ENCODE measurements at regions of chr16 and their contacts with region 1.

Region 1: DNA sequence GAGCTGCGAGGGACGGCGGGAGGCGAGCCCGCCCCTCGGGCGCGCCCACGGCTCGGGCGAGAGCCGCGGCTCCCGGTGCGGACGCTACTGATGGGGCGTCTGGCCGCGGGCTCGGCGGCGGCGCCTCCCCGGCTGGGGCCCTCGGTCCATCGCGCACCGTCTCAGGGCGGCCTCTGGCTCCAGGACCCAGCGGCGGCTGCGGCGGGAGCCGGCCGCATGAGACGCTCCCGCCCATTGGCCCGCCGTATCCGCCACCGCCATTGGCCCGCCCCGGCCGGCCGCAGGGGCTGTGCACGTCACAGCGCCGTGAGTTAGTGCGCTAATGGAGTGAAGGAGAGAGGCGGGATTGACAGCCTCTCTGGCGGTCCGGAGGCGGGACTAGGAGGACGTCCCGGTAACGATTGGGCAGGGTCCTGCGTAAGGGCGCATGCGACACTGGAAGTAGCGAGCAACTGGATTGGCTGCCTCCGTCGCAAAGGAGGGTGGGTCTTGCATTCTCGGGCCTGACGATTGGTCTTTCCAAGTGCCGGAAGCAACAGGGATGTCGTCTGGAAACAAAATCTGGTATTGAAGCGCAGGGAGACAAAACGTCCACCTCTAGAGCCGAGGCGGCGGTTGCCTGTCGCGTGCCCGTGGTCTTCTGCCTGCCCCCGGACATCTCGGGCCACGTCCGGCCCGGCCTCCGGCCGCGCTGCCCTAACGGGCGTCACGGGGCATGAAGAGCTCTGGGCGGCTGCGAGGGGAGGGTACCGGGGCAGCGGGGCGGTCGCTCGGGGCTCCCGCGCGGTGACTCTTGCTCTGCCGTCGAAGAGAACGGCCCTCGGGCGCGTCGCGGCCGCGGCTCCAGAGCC is at the start of gene ANKRD11:
- DNase-seq: peak; percentile 99 to 100
- ATAC-seq: peak; percentile 99
- H3K4me3 ChIP-seq: peak within 1 kb of the TSS; percentile 99
- H3K27ac ChIP-seq: peak within 1 kb of the TSS; percentile 93 to 100
- H3K4me1 ChIP-seq: peaks cover 0 to 7% of the 10 kb centered on the region in 2 donors
- H3K27me3 ChIP-seq: no peaks in the 10 kb centered on the region
- total RNA-seq, gene ANKRD11: 124 to 139 TPM

Region 2: GRCh38 chr16:89330177-89330856 is 160.3 kb before region 1 on chr16:
- intact Hi-C with region 1: loop called in 1 of 2 experiments (anchors 5 kb)
- DNase-seq: peak; percentile 46 to 70
- ATAC-seq: no peak
- H3K4me3 ChIP-seq: no peak overlapping the region
- H3K27ac ChIP-seq: no peak overlapping the region
- H3K4me1 ChIP-seq: peaks cover 0 to 3% of the 10 kb centered on the region in 2 donors
- H3K27me3 ChIP-seq: no peaks in the 10 kb centered on the region

Region 3: DNA sequence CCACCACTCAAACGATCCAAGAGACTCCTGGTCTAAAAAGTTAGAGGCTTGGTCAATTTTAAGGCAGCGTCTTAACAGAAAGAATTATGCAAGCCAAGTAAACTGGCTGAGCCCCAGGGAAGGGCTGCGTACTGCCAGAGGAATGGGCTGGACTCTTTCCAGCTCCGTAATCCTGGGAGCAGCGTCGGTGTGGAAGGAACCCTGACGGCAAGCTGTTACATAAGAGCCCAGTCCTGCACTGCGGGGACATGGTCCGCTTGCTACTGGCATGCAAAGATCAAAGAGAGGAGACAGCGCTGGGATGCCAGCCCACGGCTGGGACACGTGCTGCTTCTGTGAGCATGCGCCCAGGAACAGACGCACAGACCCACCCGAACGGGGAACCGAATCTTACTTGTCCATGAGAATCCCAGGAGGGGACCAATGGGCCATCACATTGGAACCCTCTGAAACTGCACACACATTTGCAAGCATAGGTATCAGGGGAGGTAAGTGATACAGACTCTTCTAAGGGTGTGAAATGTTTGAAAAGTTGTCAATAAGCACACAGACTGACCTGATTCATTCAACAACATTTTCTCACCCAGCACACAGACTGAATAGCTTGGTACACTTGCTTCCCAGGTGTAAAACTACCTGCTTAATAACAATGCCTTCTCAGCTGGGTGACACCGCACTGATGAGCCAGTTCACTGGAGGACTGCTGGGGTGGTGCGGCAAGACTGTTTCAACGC is 95.3 kb before region 1 on chr16:
- intact Hi-C with region 1: loop called in 1 of 2 experiments (anchors 10 kb)
- DNase-seq: peak; percentile 91
- ATAC-seq: peak; percentile 94
- H3K4me3 ChIP-seq: no peak overlapping the region
- H3K27ac ChIP-seq: peak overlapping the region in 1 of 2 donors; percentile 16
- H3K4me1 ChIP-seq: peaks cover 0 to 2% of the 10 kb centered on the region in 2 donors
- H3K27me3 ChIP-seq: no peaks in the 10 kb centered on the region

Region 4: DNA sequence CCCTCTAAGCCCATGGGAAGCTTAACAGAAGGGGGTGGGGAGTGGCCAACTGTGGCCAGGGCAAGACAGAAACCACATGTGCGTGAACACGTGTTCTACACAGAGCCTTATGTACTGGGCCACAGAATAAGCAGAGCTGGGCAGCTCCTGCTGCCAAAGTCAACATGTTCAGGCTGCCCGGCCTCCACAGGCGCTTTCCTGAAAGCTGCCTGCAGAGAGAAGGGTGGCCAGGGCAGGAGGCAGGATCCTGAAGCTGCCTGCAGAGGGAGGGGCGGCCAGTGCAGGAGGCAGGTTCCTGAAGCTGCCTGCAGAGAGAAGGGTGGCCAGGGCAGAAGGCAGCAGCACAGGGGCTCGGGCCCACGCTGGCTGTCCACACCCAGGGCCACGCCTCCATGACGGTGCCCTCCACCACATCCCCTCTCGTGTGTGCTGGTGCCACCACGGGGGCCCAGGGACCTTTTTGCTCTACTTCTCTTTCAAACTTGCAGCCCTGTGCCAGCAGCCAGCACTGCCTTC is 79.8 kb before region 1 on chr16:
- intact Hi-C with region 1: loop called in 1 of 2 experiments (anchors 10 kb)
- DNase-seq: peak; percentile 81 to 86
- ATAC-seq: peak; percentile 91
- H3K4me3 ChIP-seq: no peak overlapping the region
- H3K27ac ChIP-seq: no peak overlapping the region
- H3K4me1 ChIP-seq: peaks cover 0 to 2% of the 10 kb centered on the region in 2 donors
- H3K27me3 ChIP-seq: no peaks in the 10 kb centered on the region

Region 5: DNA sequence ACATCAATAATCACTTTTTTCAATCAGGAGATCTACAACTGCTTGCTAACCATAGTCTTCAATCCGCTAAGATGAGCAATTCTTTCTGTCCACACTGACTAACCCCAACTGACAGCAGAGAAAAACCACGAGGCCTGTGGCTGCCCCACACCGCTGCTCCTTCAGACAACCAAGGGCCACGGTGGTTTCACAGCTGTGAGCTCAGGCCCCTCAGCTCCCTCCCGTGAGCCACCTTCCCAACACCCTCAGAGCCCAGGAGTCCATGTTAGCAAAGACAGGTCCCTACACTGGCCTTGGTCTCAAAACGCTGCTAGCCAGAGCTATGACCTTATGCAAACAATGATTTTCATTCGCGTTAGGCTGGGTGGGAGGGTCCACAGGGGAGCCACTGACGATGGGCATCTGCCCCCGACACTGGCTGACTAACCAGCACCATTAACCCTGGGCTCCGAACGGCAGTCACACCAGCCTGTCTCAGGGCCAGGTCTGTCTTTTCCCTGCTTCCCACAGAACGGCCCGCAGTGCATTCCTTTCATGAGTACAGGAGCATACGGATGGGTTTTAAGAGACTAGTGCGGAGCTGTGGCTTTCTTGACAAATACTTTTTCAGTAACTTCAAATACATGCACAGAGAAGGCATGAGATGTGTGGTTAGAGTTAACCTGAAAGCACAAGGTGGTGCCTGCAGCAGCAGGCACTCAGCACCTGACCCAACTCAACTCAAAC is 67.5 kb before region 1 on chr16:
- intact Hi-C with region 1: loop called (anchors 5 to 10 kb)
- DNase-seq: no peak
- ATAC-seq: peak; percentile 64
- H3K4me3 ChIP-seq: no peak overlapping the region
- H3K27ac ChIP-seq: peak overlapping the region; percentile 52 to 87
- H3K4me1 ChIP-seq: peaks cover 0 to 3% of the 10 kb centered on the region in 2 donors
- H3K27me3 ChIP-seq: no peaks in the 10 kb centered on the region